ENCODE measurements at regions of chr1 and their contacts with region 1.

Region 1: GRCh38 chr1:57850176-57850940 is 426.5 kb upstream of the DAB1 start:
- DNase-seq: no peak
- ATAC-seq: no peak
- H3K4me3 ChIP-seq: no peak overlapping the region
- H3K27ac ChIP-seq: no peak overlapping the region
- H3K4me1 ChIP-seq: no peaks in the 10 kb centered on the region
- H3K27me3 ChIP-seq: no peaks in the 10 kb centered on the region
- CTCF ChIP-seq: no peak

Region 2: DNA sequence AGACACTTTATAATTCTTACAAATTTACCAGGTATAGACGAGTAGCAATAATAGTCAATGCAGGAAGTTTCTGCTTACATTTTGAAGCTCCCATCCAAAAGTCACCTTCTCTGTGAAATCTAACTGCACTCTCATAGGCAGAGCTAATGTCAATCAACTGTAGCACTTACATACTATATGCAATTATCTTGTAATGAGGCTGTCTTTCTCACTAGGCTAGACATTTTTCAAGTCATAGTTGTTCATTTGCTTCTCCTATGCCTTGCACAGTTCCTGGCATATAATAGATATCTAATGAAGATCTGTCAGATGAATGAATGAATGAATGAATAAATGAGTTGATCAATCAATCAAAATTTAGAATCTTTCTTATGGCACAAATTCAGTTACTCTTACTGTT is 153.5 kb before region 1 on chr1:
- CTCF ChIA-PET with region 1: interaction called, 13 read pairs
- POLR2A ChIA-PET with region 1: no interaction called
- in situ Hi-C with region 1: no loop called
- intact Hi-C with region 1: no loop called
- DNase-seq: no peak
- ATAC-seq: no peak
- H3K4me3 ChIP-seq: no peak overlapping the region
- H3K27ac ChIP-seq: no peak overlapping the region
- H3K4me1 ChIP-seq: no peaks in the 10 kb centered on the region
- H3K27me3 ChIP-seq: no peaks in the 10 kb centered on the region
- CTCF ChIP-seq: no peak